GM10248 (cell line): ENCODE measurements at regions of chr2 and their contacts with region 1.

Region 1: GRCh38 chr2:178761759-178762371 is 45.4 kb downstream of the TTN start:
- DNase-seq: peak; percentile 25
- CTCF ChIP-seq: peak; percentile 55

Region 2: GRCh38 chr2:178750263-178750662 is 11.6 kb before region 1 on chr2:
- CTCF ChIA-PET with region 1: interaction called, 15 read pairs
- POLR2A ChIA-PET with region 1: no interaction called
- DNase-seq: no peak
- CTCF ChIP-seq: no peak

Region 3: GRCh38 chr2:178782236-178782635 is 20.4 kb after region 1 on chr2:
- CTCF ChIA-PET with region 1: interaction called, 11 read pairs
- POLR2A ChIA-PET with region 1: no interaction called
- DNase-seq: no peak
- CTCF ChIP-seq: no peak

Region 4: GRCh38 chr2:178858896-178859625 is 97.2 kb after region 1 on chr2:
- CTCF ChIA-PET with region 1: no interaction called
- POLR2A ChIA-PET with region 1: no interaction called
- DNase-seq: no peak
- CTCF ChIP-seq: no peak